H1 (cell line): ENCODE measurements at regions of chr17 and their contacts with region 1.

Region 1: DNA sequence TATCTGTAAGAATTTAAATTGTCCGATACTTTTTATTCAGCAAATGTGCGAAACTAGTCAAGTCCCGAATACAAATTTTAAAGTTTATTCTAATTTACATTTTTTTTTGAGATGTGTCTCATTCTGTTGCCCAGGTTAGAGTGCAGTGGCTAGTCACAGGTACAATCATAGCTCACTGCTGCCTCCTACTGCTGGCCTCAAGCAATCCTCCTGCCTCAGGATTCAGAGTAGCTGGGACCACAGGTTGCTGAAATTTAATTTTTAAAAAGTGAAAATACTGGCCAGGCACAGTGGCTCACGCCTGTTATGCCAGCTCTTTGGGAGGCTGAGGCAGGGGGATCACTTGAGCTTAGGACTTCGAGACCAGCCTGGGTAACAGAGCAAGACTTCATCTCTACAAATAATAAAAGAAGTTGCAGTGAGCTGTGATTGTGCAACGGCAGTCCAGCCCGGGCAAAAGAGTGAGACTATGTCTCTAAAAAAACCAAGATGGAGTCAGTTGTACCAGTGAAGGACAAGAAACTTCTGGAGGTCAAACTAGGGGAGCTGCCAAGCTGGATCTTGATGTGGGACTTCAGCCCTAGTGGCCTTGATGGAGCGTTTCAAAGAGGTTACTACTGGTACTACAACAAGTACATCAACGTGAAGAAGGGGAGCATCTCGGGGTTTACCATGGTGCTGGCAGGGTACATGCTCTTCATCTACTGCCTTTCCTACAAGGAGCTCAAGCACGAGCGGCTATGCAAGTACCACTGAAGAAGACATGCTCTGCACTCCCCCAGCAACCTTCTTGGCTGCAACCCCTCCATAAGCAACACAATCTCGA is 5.6 kb downstream of the POLG2 start:
- DNase-seq: no peak
- H3K4me3 ChIP-seq: no peak overlapping the region
- H3K27ac ChIP-seq: no peak overlapping the region
- H3K4me1 ChIP-seq: peaks cover 0 to 3% (median 0%) of the 10 kb centered on the region in 4 experiments; a peak in 1 of 7 replicates
- H3K27me3 ChIP-seq: no peaks in the 10 kb centered on the region
- CTCF ChIP-seq: peak; percentile 54 to 64 (median 60)
- EP300 ChIP-seq: no peak
- POLR2A ChIP-seq: no peak
- RAD21 ChIP-seq: peak; percentile 63 to 68

Region 2: GRCh38 chr17:64262417-64263260 is 228.6 kb before region 1 on chr17 and contains the start of gene TEX2:
- CTCF ChIA-PET with region 1: no interaction called
- POLR2A ChIA-PET with region 1: no interaction called
- DNase-seq: peak in 1 of 2 experiments; percentile 54
- H3K4me3 ChIP-seq: peak within 1 kb of the TSS; percentile 72 to 97 (median 84)
- H3K27ac ChIP-seq: peak within 1 kb of the TSS; percentile 94
- H3K4me1 ChIP-seq: peaks cover 1 to 5% (median 4%) of the 10 kb centered on the region in 4 experiments; a peak in 4 of 7 replicates
- H3K27me3 ChIP-seq: peaks cover 0 to 9% (median 8%) of the 10 kb centered on the region in 4 experiments; a peak in 4 of 7 replicates
- CTCF ChIP-seq: no peak
- EP300 ChIP-seq: no peak
- POLR2A ChIP-seq: no peak
- RAD21 ChIP-seq: no peak
- total RNA-seq, gene TEX2: 15.6 and 16.3 TPM in 2 replicates

Region 3: DNA sequence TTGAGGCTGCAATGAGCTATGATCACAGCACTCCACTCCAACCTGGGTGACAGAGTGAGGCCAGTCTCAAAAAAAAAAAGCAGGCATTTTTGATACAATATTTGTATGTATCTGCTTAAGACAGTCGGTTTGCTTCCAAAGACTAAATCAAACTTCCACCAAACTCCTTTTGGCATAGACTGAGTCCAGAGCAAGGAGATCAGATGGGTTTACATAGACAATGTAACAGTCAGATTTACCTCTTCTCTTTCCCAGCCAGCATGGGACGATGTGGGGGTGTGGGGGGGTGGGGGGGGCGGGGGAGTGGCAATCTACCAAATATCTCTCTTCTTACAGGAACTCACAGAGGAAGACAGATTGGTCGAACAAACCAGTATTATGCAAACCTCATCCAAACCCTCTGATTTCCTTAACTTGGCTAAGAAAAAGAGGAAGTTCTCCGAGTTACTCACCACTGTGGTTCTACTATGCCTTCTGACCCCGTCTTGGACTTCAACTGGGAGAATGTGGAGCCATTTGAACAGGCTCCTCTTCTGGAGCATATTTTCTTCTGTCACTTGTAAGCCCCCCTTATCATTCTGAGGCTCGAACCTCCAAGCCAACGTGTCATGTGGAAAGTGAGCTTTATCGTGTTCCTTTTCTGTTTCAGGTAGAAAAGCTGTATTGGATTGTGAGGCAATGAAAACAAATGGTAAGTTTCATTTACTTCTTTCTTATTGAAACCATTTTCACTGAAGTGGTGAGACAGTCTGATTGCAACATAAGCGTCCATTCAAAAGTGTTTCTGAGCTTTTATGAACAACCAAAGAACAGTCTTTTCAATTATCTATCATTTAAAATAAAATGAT is 42.4 kb before region 1 on chr17 and contains the start of gene MILR1:
- CTCF ChIA-PET with region 1: no interaction called
- POLR2A ChIA-PET with region 1: no interaction called
- DNase-seq: no peak
- H3K4me3 ChIP-seq: no peak within 1 kb of the TSS
- H3K27ac ChIP-seq: no peak within 1 kb of the TSS
- H3K4me1 ChIP-seq: no peaks in the 10 kb centered on the region
- H3K27me3 ChIP-seq: no peaks in the 10 kb centered on the region
- CTCF ChIP-seq: no peak
- EP300 ChIP-seq: no peak
- POLR2A ChIP-seq: no peak
- RAD21 ChIP-seq: no peak
- total RNA-seq, gene MILR1: not detected in 2 replicates

Region 4: GRCh38 chr17:64470625-64471024 is 20.6 kb before region 1 on chr17:
- CTCF ChIA-PET with region 1: interaction called, 12 read pairs
- POLR2A ChIA-PET with region 1: interaction called, 6 read pairs
- DNase-seq: no peak
- H3K4me3 ChIP-seq: no peak overlapping the region
- H3K27ac ChIP-seq: no peak overlapping the region
- H3K4me1 ChIP-seq: peaks cover 0 to 5% (median 0%) of the 10 kb centered on the region in 4 experiments; a peak in 3 of 7 replicates
- H3K27me3 ChIP-seq: no peaks in the 10 kb centered on the region
- CTCF ChIP-seq: no peak
- EP300 ChIP-seq: no peak
- POLR2A ChIP-seq: no peak
- RAD21 ChIP-seq: no peak

Region 5: GRCh38 chr17:64479650-64480049 is 11.6 kb before region 1 on chr17:
- CTCF ChIA-PET with region 1: interaction called, 14 read pairs
- POLR2A ChIA-PET with region 1: interaction called, 13 read pairs
- DNase-seq: no peak
- H3K4me3 ChIP-seq: no peak overlapping the region
- H3K27ac ChIP-seq: no peak overlapping the region
- H3K4me1 ChIP-seq: no peaks in the 10 kb centered on the region
- H3K27me3 ChIP-seq: no peaks in the 10 kb centered on the region
- CTCF ChIP-seq: no peak
- EP300 ChIP-seq: no peak
- POLR2A ChIP-seq: no peak
- RAD21 ChIP-seq: no peak